ENCODE measurements at regions of chr4 and their contacts with region 1.

Region 1: GRCh38 chr4:4308800-4309441 is 18.9 kb downstream of the ZBTB49 start:
- DNase-seq: peak; percentile 67
- H3K4me3 ChIP-seq: no peak overlapping the region
- H3K27ac ChIP-seq: peak overlapping the region; percentile 69
- H3K4me1 ChIP-seq: peaks cover 18% of the 10 kb centered on the region
- H3K27me3 ChIP-seq: no peaks in the 10 kb centered on the region
- CTCF ChIP-seq: no peak

Region 2: DNA sequence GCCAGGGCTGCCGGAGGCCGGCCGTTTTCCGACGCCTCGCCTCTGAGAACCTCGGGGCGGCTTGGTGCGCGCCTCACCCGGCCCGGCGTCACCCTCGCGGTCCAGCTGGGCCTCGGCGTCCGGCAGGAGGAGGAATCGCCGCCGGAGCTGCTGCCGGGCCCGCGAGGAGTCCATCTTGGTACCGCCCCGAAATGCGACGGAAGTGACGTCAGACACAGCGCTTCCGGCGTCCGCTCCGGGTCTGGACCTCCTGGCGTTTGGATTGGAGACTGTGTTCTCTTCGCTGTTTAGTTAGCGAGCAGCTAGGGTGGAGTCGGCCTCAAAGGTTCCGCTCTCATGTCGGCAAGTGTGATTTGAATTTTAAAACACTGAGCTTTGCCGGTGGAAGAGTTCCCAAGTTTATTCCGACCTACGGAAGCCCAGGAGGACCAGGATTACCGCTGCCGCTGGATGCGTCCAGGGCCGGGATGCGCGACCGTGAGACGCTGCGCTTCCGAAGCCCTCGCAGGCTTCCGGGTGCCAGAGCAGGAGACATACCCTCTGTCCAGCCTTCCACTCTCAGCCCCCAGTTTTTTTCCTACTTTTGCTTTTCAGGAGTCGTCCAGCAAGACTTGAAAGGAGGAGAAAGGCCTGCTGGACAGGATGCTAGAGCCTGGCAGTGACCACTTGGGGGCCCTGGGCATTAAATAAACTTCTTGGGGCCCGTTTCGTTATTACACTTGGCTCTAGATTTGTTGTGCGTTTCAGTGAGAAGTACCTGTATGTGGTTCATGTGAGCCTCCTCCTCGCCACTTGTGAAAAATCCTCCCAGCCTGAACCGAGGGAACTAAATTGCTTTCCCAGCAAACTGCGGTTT is 60.7 kb before region 1 on chr4 and contains the start of gene TMEM128:
- CTCF ChIA-PET with region 1: no interaction called
- dilution Hi-C with region 1: no loop called
- in situ Hi-C with region 1: no loop called
- intact Hi-C with region 1: no loop called
- DNase-seq: peak; percentile 92
- H3K4me3 ChIP-seq: peak within 1 kb of the TSS; percentile 75 to 97 (median 97)
- H3K27ac ChIP-seq: peak within 1 kb of the TSS; percentile 87
- H3K4me1 ChIP-seq: peaks cover 17% of the 10 kb centered on the region
- H3K27me3 ChIP-seq: no peaks in the 10 kb centered on the region
- CTCF ChIP-seq: peak in 1 of 2 donors; percentile 32
- total RNA-seq, gene TMEM128: 20.3 to 28.8 TPM

Region 3: GRCh38 chr4:4289941-4290850 is 18.7 kb before region 1 on chr4 and contains the starts of genes LYAR and ZBTB49:
- CTCF ChIA-PET with region 1: no interaction called
- dilution Hi-C with region 1: no loop called
- in situ Hi-C with region 1: no loop called
- intact Hi-C with region 1: loop called (anchors 1 kb)
- DNase-seq: peak; percentile 93
- H3K4me3 ChIP-seq: peak within 1 kb of the TSS; percentile 61 to 98 (median 96)
- H3K27ac ChIP-seq: peak within 1 kb of the TSS; percentile 58
- H3K4me1 ChIP-seq: peaks cover 9% of the 10 kb centered on the region
- H3K27me3 ChIP-seq: no peaks in the 10 kb centered on the region
- CTCF ChIP-seq: no peak
- total RNA-seq, gene LYAR: 6.3 to 36.3 TPM
- total RNA-seq, gene ZBTB49: 4.7 to 8.6 TPM